Uterus (tissue), 4 donors: ENCODE measurements at regions of chr15 and their contacts with region 1.

Region 1: DNA sequence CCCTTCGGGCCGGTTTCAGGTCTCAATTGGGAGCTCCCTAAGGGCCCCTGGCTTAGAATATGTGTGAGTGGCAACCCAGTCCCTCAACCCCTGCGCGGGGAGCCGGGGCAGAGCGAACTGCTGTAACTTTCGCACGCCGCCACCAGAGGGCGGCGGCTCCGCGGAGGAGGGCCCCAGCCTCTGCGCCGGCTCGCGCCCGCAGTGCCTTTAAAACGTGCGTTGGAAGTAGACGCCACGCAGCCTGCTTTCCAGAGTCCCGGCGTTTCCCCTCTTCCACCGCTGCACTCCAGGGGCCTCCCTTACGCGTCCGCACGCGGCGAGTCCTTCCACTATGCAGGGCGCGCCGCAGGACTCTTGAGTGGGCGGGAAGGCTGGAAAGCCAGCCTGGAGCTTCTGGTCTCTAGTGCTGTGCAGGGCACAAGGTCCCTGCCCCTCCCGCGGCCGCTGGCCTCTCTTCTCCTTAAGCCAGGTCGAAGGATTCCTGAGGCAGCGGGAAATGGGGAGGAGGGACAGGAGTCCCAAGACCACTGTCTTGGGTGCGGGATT is 23.7 kb upstream of the RNU6-1 start:
- DNase-seq: peak; percentile 80 to 84
- H3K4me3 ChIP-seq: peak overlapping the region; percentile 26 to 39
- H3K27ac ChIP-seq: peak overlapping the region; percentile 57 to 73
- H3K4me1 ChIP-seq: peaks cover 0 to 5% of the 10 kb centered on the region in 2 donors
- H3K27me3 ChIP-seq: no peaks in the 10 kb centered on the region
- CTCF ChIP-seq: peak; percentile 94 to 97 (median 97)
- POLR2A ChIP-seq: peak in 1 of 2 donors; percentile 23

Region 2: DNA sequence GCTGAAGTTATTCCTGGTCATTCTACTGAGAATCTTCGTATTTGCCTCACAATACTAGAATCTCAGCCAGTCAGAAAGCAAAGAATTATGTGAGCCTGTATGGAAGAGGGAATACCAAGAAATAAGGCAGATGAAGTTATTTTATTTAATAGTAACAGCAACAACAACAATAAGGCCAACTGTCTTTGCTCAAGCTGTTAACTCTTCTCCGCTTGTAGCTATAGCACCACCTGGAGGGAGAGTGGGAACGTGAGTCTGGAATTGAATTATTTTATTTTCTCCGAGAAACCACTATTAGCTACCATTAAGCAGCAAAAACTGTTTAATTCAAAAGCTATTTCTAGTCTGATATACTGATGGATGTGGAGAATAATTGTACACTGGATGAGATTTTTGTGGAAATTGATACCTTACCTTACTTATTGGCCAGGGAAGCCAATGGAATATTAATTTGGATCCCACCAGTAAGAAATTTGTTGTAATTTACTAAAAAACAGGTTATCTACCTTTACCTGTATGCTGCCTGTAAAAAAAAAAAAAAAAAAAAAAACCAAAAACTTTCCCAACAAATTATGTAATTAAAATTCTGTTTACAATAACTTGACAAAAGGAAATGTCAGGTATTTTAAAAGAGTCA is 291.5 kb after region 1 on chr15:
- intact Hi-C with region 1: loop called (anchors 5 kb)
- DNase-seq: peak; percentile 33 to 51
- H3K4me3 ChIP-seq: no peak overlapping the region
- H3K27ac ChIP-seq: peak overlapping the region in 1 of 2 donors; percentile 41
- H3K4me1 ChIP-seq: no peaks in the 10 kb centered on the region
- H3K27me3 ChIP-seq: no peaks in the 10 kb centered on the region
- CTCF ChIP-seq: peak; percentile 74 to 84 (median 80)
- POLR2A ChIP-seq: no peak